Activated CD4-positive, alpha-beta memory T cell treated with anti-CD3 and anti-CD28 coated beads for 36 hours (primary cell): ENCODE measurements at regions of chr2 and their contacts with region 1.

Region 1: GRCh38 chr2:178891265-178891958 is 84.2 kb upstream of the TTN start:
- DNase-seq: peak; percentile 61
- H3K4me3 Mint-ChIP-seq: no peak overlapping the region
- H3K27ac Mint-ChIP-seq: no peak overlapping the region
- H3K4me1 Mint-ChIP-seq: no peaks in the 10 kb centered on the region
- H3K27me3 Mint-ChIP-seq: no peaks in the 10 kb centered on the region

Region 2: DNA sequence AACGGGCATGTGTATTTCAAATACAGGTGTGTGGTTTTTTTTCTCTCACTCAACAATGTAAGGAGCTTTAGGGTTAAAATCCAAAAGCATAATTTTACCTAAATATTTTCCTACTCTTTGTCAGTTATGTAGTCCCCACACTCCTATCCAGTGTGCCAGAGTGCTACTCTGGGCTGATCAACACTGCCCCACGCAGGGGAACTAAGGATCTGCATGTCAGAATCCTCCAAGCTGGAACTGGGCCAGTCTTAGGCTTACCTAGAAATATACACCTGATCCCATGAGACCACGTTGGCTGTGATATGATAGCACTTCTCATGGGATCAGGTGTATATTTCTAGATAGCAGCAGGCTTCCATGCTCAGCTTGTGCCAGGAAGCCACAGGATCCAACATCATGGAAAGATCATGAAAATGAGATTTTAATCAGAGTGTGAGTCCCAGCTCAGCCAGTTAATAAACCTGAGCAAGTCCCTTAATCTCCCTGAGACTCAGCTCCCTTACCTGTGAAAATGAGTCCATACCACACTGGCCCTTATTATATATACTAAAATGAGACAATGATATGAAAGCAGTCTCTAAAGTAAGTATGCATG is 128.8 kb after region 1 on chr2:
- CTCF ChIA-PET with region 1: interaction called, 11 read pairs
- POLR2A ChIA-PET with region 1: no interaction called
- intact Hi-C with region 1: loop called (anchors 2 kb)
- DNase-seq: peak; percentile 63
- H3K4me3 Mint-ChIP-seq: no peak overlapping the region
- H3K27ac Mint-ChIP-seq: no peak overlapping the region
- H3K4me1 Mint-ChIP-seq: peaks cover 4% of the 10 kb centered on the region
- H3K27me3 Mint-ChIP-seq: no peaks in the 10 kb centered on the region

Region 3: GRCh38 chr2:179129574-179130238 is 238.3 kb after region 1 on chr2:
- CTCF ChIA-PET with region 1: interaction called, 23 read pairs
- POLR2A ChIA-PET with region 1: no interaction called
- intact Hi-C with region 1: loop called (anchors 1 kb)
- DNase-seq: no peak
- H3K4me3 Mint-ChIP-seq: no peak overlapping the region
- H3K27ac Mint-ChIP-seq: no peak overlapping the region
- H3K4me1 Mint-ChIP-seq: no peaks in the 10 kb centered on the region
- H3K27me3 Mint-ChIP-seq: no peaks in the 10 kb centered on the region

Region 4: DNA sequence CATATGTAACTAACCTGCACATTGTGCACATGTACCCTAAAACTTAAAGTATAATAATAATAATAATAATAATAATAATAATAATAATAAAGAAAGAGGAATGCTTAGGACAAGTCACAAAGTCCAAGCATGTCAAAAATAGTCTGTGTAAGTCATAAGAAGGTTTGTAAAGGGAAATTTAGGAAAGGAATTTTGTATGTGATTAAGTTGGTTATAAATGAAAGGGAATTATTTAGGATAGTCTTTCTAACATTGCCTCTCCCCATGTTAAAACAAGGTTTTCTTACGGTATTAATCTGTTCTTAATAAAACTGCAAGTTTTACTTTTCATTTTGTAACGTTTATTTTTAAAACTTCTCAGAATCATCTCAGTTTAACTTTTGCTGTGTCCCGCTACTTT is 310.5 kb after region 1 on chr2:
- CTCF ChIA-PET with region 1: no interaction called
- POLR2A ChIA-PET with region 1: no interaction called
- intact Hi-C with region 1: no loop called
- DNase-seq: no peak
- H3K4me3 Mint-ChIP-seq: no peak overlapping the region
- H3K27ac Mint-ChIP-seq: no peak overlapping the region
- H3K4me1 Mint-ChIP-seq: no peaks in the 10 kb centered on the region
- H3K27me3 Mint-ChIP-seq: no peaks in the 10 kb centered on the region

Region 5: DNA sequence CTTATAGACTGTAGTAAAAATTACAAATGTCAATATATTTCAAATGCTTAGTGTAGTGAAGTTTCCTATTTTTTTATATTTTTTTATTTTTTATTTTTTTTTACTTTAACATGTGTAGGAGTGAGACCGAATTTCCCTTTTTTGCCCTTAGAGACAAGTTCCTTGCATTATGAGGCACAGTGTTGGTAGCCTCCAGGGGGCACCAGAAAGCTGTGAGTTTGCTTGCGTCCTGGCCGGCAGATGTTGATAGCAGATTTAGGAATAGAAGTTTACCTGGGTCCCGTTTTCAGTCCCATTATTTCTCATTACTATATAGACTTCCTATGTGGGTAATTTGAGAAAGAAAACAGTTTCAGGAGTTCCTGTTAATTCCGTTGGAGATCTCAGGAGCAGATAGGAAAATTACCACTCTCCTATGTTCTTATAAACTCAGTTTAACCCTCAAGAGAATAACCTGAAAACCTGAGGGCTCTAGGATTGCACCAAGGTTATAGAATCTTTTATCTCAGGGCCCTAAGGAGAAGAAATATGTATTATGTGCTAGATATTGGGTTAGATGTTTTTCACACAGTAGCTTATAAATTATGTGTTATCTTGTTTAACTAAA is 530.7 kb after region 1 on chr2:
- CTCF ChIA-PET with region 1: no interaction called
- POLR2A ChIA-PET with region 1: no interaction called
- intact Hi-C with region 1: loop called (anchors 10 kb)
- DNase-seq: peak; percentile 66
- H3K4me3 Mint-ChIP-seq: no peak overlapping the region
- H3K27ac Mint-ChIP-seq: no peak overlapping the region
- H3K4me1 Mint-ChIP-seq: no peaks in the 10 kb centered on the region
- H3K27me3 Mint-ChIP-seq: no peaks in the 10 kb centered on the region